ENCODE measurements at regions of chr14 and their contacts with region 1.

Region 1: GRCh38 chr14:77314043-77314442 is 6.6 kb downstream of the POMT2 start:
- DNase-seq: peak in 3 of 5 donors; percentile 35 to 86 (median 64)
- H3K4me3 ChIP-seq: no peak overlapping the region
- H3K27ac ChIP-seq: no peak overlapping the region
- H3K4me1 ChIP-seq: peaks cover 0 to 12% (median 5%) of the 10 kb centered on the region in 3 donors
- H3K27me3 ChIP-seq: no peaks in the 10 kb centered on the region
- CTCF ChIP-seq: no peak

Region 2: DNA sequence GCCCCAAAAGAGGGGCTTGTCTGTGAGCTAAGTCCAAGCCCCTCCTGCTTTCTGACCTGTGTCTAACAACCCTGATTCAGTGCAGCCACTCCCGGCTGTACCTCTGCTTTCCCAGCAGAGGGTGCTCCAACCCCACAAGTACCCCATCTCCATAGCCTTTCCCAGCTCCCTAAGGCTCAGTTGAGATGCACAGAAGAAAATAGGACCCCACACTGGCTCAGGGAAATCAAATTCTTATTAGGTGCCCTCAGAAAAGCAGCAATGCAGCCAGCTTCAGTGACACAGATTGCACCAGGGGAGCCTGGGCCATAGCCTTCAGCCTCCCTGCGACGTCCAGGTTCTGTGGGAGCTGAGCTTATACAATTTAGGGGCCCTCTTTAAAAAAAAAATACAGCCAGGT is 438.0 kb before region 1 on chr14:
- intact Hi-C with region 1: loop called (anchors 10 kb)
- DNase-seq: peak in 4 of 5 donors; percentile 73 to 81 (median 78)
- H3K4me3 ChIP-seq: no peak overlapping the region
- H3K27ac ChIP-seq: no peak overlapping the region
- H3K4me1 ChIP-seq: no peaks in the 10 kb centered on the region
- H3K27me3 ChIP-seq: no peaks in the 10 kb centered on the region
- CTCF ChIP-seq: peak; percentile 94

Region 3: DNA sequence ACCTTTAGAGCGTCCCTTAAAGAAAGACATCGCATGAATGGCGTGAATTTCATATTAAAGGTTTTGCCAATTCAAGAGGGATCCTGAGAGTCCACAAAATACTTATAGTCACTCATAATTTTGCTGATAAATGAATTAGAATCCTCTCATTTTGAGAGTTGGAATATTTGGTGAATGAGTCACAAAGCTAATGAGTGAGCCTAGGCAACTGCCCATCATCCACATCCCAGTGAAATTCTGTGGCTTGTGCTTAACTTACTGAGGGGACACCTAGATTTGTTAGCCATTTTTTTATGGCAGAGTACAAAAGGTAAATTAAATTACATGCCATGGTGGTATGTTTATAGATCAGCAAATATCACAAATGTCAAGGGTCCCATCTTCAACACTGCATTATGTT is 122.0 kb after region 1 on chr14:
- intact Hi-C with region 1: no loop called
- DNase-seq: no peak
- H3K4me3 ChIP-seq: no peak overlapping the region
- H3K27ac ChIP-seq: no peak overlapping the region
- H3K4me1 ChIP-seq: no peaks in the 10 kb centered on the region
- H3K27me3 ChIP-seq: no peaks in the 10 kb centered on the region
- CTCF ChIP-seq: no peak